KBM-7 (cell line): ENCODE measurements at regions of chrX and their contacts with region 1.

Region 1: DNA sequence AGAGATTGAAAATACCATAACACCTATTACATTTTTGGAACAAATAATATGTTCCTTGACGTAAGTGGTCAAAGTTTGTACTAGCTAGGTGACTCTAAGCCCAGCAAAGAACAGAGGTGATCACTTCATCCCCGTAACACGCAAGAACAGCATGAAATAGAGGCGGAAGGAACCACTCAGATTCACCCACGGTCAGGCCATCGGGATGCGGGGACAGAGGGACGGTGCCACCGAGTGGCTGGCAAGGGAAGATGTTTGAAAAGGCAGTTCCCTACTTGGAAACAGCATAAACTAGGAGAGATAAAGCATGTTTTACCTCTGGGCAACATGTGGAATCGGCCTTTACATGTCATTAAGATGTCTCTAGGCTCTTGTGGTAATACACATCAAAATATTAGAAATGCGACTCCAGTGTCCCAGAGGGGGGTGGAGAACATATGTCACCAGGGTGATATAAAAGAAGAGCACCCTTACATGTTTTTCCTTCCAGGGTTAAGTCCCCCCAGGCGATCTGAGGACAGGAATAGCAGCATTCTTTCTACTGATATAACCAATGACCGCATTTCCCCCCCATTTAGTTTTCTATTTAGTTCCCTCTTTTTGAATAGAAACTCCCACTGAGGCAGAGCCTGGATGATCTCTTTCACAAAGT is 84.0 kb downstream of the PHKA2 start:
- DNase-seq: peak; percentile 20

Region 2: GRCh38 chrX:18390941-18391538 is 508.9 kb before region 1 on chrX:
- in situ Hi-C with region 1: loop called (anchors 10 kb)
- DNase-seq: peak; percentile 71

Region 3: GRCh38 chrX:19070555-19071049 is 170.7 kb after region 1 on chrX:
- in situ Hi-C with region 1: no loop called
- DNase-seq: no peak